Astrocyte of the cerebellum (primary cell): ENCODE measurements at regions of chr5 and their contacts with region 1.

Region 1: DNA sequence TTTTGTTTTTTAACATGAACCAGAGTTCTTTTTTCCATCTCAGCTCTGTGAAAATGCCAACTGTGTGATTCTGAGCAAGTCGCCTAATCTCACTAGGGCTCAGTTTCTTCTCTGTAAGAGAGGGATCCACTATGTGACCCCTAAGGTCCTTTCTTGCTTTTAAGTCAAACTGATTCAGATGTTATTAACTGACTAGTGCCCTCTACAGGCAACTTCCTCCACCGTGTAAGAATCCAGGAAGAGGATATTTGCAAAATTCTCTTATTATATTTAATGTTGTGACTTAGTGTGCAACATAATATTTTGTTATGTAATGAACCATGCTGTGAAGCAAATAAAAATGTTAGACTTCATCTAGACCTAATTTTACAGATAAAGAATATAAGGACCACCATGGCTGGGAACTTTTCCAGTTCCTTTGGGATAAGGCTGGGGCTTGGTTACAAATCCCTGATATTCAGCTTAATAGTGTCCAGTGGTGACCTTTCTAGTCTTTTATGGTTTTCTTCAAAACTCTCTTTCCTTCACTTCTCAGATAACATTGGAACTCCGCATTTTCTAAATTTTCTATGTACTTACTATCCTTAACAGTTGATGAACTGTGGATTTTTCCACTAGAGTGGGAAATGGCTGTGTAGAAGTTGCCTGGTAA is 244.7 kb downstream of the PIK3R1 start:
- DNase-seq: peak; percentile 58
- H3K4me3 ChIP-seq: no peak overlapping the region
- CTCF ChIP-seq: peak; percentile 69

Region 2: GRCh38 chr5:68970617-68971016 is 510.3 kb after region 1 on chr5:
- in situ Hi-C with region 1: loop called (anchors 10 kb)
- DNase-seq: no peak
- H3K4me3 ChIP-seq: no peak overlapping the region
- CTCF ChIP-seq: no peak